Panc1 (cell line): ENCODE measurements at regions of chr11 and their contacts with region 1.

Region 1: DNA sequence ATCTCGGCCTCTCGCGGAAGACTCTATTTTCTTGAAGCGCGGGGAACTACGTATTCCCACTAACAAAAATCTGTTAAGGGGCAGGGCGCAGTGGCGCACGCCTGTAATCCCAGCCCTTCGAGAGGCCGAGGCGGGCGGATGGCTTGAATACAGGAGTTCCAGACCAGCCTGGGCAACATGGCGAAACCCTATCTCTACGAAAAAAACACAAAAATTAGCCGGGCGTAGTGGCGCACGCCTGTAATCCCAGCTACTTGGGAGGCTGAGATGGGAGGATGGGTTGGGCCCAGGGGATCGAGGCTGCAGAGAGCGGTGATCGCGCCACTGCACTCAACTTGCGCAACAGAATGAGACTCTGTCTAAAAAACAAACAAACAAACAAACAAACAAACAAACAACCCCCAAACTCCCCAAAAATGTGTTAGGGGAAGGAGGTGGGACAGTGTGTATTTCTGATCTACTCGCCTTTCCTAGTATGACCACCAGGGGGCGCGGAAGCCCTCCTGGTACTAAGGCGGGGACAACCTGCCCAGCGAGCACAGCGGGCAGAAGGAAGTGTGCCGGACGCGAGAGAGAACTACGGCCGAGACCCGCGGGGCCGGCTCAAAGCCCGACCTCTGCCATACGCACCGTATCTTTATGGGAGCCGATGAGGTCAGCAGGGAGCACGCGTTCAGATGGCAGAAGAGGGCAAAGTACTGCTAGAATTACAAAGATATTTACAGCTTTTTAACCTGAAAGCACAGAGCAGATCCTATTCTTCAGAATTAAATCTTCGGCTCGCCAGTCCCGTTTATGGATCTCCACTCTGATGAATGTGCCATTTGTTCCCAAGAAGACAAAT is 1.3 kb upstream of the STX3 start:
- DNase-seq: peak; percentile 57
- ATAC-seq: peak; percentile 69
- H3K4me3 ChIP-seq: peak overlapping the region; percentile 81 to 98
- H3K27ac ChIP-seq: peak overlapping the region; percentile 76
- H3K4me1 ChIP-seq: peaks cover 14% of the 10 kb centered on the region
- H3K27me3 ChIP-seq: no peaks in the 10 kb centered on the region
- CTCF ChIP-seq: peak; percentile 91

Region 2: GRCh38 chr11:59802639-59803176 is 48.8 kb after region 1 on chr11:
- CTCF ChIA-PET with region 1: interaction called, 8 read pairs
- POLR2A ChIA-PET with region 1: interaction called, 14 read pairs
- in situ Hi-C with region 1: no loop called
- intact Hi-C with region 1: loop called (anchors 1 kb)
- DNase-seq: peak; percentile 28
- ATAC-seq: peak; percentile 82
- H3K4me3 ChIP-seq: no peak overlapping the region
- H3K27ac ChIP-seq: no peak overlapping the region
- H3K4me1 ChIP-seq: no peaks in the 10 kb centered on the region
- H3K27me3 ChIP-seq: no peaks in the 10 kb centered on the region
- CTCF ChIP-seq: peak; percentile 73

Region 3: DNA sequence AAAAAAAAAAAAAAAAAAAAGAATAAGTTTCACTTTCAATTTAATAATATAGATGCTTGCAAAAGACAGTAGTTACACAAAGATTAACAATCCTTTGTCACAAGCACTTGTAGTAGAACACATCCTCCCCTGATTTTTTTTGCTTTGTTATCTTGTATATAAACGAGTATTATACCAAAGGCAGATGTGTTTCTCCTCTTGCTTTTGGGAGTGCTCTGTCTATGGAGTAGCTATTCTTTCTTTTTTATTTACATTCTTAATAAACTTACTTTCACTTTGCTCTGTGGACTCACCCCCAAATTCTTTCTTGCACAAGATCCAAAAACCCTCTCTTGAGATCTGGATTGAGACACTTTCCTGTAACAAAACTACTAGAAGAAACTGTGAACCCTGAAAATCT is 60.1 kb after region 1 on chr11:
- CTCF ChIA-PET with region 1: interaction called, 4 read pairs
- POLR2A ChIA-PET with region 1: interaction called, 11 read pairs
- in situ Hi-C with region 1: no loop called
- intact Hi-C with region 1: no loop called
- DNase-seq: no peak
- ATAC-seq: no peak
- H3K4me3 ChIP-seq: no peak overlapping the region
- H3K27ac ChIP-seq: no peak overlapping the region
- H3K4me1 ChIP-seq: peaks cover 5% of the 10 kb centered on the region; the same call in 1 of the 2 replicates
- H3K27me3 ChIP-seq: no peaks in the 10 kb centered on the region
- CTCF ChIP-seq: no peak

Region 4: GRCh38 chr11:59833602-59834001 is 79.7 kb after region 1 on chr11:
- CTCF ChIA-PET with region 1: no interaction called
- POLR2A ChIA-PET with region 1: no interaction called
- in situ Hi-C with region 1: no loop called
- intact Hi-C with region 1: no loop called
- DNase-seq: no peak
- ATAC-seq: no peak
- H3K4me3 ChIP-seq: no peak overlapping the region
- H3K27ac ChIP-seq: no peak overlapping the region
- H3K4me1 ChIP-seq: no peaks in the 10 kb centered on the region
- H3K27me3 ChIP-seq: no peaks in the 10 kb centered on the region; the same call in 1 of the 2 replicates
- CTCF ChIP-seq: no peak